Right cardiac atrium (tissue), 5 donors: ENCODE measurements at regions of chr14 and their contacts with region 1.

Region 1: DNA sequence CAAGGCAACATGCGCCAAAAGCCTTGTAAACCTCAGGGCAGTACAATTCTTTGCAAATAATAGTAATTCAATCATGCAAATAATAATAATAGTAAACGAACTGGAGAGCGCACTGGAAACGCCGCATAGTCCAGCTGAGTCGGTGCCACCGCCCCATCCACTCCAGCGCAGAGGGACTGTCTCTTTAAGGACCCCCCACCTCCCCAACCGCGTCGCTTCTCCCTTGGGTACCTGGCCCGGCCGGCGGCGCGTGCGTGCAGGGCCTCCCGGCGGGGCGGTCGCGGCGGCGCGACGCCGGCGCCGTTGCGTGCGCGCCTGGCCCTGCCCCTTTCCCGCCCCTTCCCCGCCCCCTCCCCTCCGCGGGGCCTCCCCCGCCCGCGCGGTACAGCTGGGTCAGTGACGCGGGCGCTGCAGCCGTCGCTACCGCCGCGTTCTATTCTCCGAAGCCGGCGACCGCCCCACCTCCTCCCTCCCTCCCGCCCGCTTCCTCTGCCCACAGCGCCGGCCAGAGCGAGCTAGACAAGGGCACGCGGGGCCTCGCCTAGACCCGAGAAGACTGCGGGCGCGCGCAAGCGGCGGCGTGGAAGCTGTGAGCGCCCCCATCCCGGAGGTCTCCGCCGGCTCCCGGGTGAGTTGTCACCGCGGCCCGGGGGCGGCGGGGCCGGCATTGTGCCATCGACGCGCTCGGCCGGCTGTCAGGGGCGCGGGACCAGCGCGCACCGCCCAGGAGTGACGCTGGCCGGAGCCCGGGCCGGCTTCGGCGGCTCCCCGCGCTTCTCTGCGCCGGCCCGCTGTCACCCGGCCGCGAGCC is at the start of gene SUSD6:
- DNase-seq: peak; percentile 93 to 97 (median 97)
- ATAC-seq: peak; percentile 91 to 94
- H3K4me3 ChIP-seq: peak within 1 kb of the TSS; percentile 98
- H3K27ac ChIP-seq: peak within 1 kb of the TSS; percentile 100
- H3K4me1 ChIP-seq: peaks cover 20% of the 10 kb centered on the region
- H3K27me3 ChIP-seq: no peaks in the 10 kb centered on the region
- total RNA-seq, gene SUSD6: 16.5 to 25.9 (median 22.1) TPM

Region 2: GRCh38 chr14:69226178-69226577 is 385.2 kb before region 1 on chr14:
- intact Hi-C with region 1: no loop called
- DNase-seq: peak in 1 of 3 donors; percentile 25
- ATAC-seq: peak; percentile 83 to 94
- H3K4me3 ChIP-seq: no peak overlapping the region
- H3K27ac ChIP-seq: peak overlapping the region; percentile 23
- H3K4me1 ChIP-seq: peaks cover 2% of the 10 kb centered on the region
- H3K27me3 ChIP-seq: no peaks in the 10 kb centered on the region

Region 3: GRCh38 chr14:69712599-69713088 is 101.2 kb after region 1 on chr14:
- intact Hi-C with region 1: loop called in 2 of 4 experiments (anchors 5 kb)
- DNase-seq: peak; percentile 52 to 84 (median 75)
- ATAC-seq: peak; percentile 39 to 46
- H3K4me3 ChIP-seq: no peak overlapping the region
- H3K27ac ChIP-seq: peak overlapping the region; percentile 53
- H3K4me1 ChIP-seq: peaks cover 33% of the 10 kb centered on the region
- H3K27me3 ChIP-seq: no peaks in the 10 kb centered on the region